Psoas muscle (tissue), 8 donors: ENCODE measurements at regions of chr2 and their contacts with region 1.

Region 1: GRCh38 chr2:209441541-209441940 is 17.7 kb downstream of the MAP2 start:
- DNase-seq: no peak
- ATAC-seq: no peak
- H3K4me3 ChIP-seq: no peak overlapping the region
- H3K27ac ChIP-seq: no peak overlapping the region
- H3K4me1 ChIP-seq: no peaks in the 10 kb centered on the region
- H3K27me3 ChIP-seq: no peaks in the 10 kb centered on the region
- CTCF ChIP-seq: no peak

Region 2: DNA sequence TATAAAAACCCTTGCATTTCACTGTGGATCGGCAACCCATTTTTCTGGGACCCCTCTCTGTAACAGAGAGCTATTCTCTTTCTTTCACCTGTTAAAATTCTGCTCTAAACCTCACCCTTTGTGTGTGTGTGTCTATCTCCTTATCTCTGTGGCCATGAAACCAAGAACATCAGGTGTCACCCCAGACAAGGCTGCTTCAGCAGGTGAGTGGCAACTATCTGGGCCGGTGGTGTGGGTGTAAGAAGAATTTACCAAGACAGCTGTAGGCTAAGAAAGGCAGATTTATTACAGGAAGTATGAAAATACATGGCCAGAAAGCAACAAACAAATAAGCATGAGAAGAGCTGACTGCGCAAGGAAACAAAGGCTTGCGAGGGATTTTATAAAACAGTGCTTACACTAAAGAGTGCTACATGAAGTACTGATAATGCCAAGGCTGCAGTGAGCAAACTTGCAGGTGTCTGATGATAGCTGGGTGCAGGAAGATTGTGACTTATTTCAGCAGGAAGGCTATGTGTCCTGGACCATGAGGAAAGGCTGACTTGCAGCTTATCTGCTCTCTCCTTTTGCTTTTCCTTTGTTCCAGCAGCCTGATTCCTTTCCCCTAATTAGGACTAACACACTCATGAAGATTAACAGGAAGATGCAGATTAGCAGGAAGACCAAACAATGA is 613.9 kb before region 1 on chr2:
- intact Hi-C with region 1: loop called in 1 of 2 experiments (anchors 5 kb)
- DNase-seq: no peak
- ATAC-seq: no peak
- H3K4me3 ChIP-seq: no peak overlapping the region
- H3K27ac ChIP-seq: no peak overlapping the region
- H3K4me1 ChIP-seq: no peaks in the 10 kb centered on the region
- H3K27me3 ChIP-seq: no peaks in the 10 kb centered on the region
- CTCF ChIP-seq: no peak